Uterus (tissue), 4 donors: ENCODE measurements at regions of chr2 and their contacts with region 1.

Region 1: GRCh38 chr2:189657867-189658266 is 3.4 kb upstream of the ASNSD1 start:
- DNase-seq: no peak
- H3K4me3 ChIP-seq: no peak overlapping the region
- H3K27ac ChIP-seq: peak overlapping the region; percentile 21 to 42
- H3K4me1 ChIP-seq: peaks cover 0 to 7% of the 10 kb centered on the region in 2 donors
- H3K27me3 ChIP-seq: no peaks in the 10 kb centered on the region
- CTCF ChIP-seq: no peak
- POLR2A ChIP-seq: no peak

Region 2: DNA sequence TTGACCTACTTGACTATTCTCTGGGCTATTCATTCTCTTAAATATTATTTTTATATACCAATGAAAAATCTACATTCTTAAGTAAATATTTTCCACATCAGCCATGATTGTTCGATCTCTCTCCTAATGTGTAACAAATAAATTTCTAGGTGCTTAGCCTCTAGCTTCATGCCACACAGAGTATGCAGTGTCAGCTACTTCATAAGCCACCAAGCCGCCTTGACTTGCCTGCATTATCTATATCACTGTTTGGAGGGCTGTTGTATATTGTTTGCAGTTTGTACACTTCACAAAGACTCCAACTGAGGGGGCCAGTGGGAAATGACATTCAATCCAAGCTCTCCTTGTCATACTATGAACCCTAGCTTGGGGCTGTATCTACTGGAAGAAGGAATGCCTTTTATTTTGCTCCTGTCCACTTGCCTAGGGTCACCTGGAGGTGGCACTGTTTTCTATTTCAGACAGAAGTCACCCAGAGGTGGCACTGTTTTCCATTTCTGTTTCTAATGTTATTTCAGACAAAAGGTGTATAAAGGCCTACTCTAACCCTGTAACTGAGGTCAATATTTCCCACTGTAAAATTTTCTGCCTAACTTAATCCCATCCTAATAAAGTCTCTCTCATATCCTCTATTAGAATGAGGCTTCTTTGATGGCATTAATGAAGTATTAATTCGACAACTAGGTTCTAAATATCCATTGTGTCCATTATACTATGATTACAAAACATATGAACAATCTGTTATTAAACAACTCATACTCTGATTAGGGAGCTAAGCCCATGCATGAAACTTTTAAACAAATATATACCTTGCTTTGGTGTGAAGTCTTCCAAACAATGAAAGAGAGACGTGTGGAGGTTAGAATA is 514.7 kb before region 1 on chr2:
- intact Hi-C with region 1: no loop called
- DNase-seq: no peak
- H3K4me3 ChIP-seq: no peak overlapping the region
- H3K27ac ChIP-seq: peak overlapping the region in 1 of 2 donors; percentile 2
- H3K4me1 ChIP-seq: no peaks in the 10 kb centered on the region
- H3K27me3 ChIP-seq: no peaks in the 10 kb centered on the region
- CTCF ChIP-seq: peak in 2 of 4 experiments; percentile 31 to 33
- POLR2A ChIP-seq: no peak

Region 3: GRCh38 chr2:189698020-189698887 is 40.4 kb after region 1 on chr2:
- intact Hi-C with region 1: loop called (anchors 5 kb)
- DNase-seq: peak in 1 of 2 donors; percentile 64
- H3K4me3 ChIP-seq: no peak overlapping the region
- H3K27ac ChIP-seq: no peak overlapping the region
- H3K4me1 ChIP-seq: no peaks in the 10 kb centered on the region
- H3K27me3 ChIP-seq: no peaks in the 10 kb centered on the region
- CTCF ChIP-seq: peak; percentile 30 to 67 (median 50)
- POLR2A ChIP-seq: no peak

Region 4: DNA sequence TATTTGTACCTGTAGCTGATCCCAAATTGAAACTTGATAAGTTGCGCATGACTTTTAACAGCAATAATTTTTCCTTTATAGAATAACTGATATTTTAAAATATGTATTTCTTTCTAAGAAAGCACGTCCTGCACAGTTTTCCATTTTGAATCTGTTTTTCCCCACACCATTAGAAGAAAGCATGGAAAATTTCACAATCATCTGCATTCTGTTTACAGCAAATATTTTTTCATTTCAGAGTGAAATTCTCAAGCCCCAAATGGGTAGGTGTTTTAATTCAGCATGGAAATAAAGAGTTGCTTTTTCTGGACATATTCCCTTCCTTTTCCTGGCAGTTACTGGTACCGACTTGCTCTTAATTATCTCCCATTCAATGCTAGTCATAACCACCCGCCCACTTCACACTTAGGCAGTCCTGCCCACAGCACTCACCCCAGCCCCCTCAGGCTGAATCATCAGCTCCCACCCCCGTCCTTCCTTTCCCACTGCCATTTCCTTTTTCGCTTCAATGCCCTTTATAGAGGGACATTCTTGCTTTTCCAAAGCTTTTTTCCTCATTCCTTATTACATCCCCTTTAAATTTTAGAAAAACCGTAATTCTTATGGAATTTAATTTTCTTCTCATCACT is 1133.6 kb after region 1 on chr2:
- intact Hi-C with region 1: no loop called
- DNase-seq: peak; percentile 23 to 63
- H3K4me3 ChIP-seq: no peak overlapping the region
- H3K27ac ChIP-seq: peak overlapping the region; percentile 33 to 50
- H3K4me1 ChIP-seq: no peaks in the 10 kb centered on the region
- H3K27me3 ChIP-seq: no peaks in the 10 kb centered on the region
- CTCF ChIP-seq: no peak
- POLR2A ChIP-seq: no peak